ENCODE measurements at regions of chr21 and their contacts with region 1.

Region 1: GRCh38 chr21:42652527-42653230 is 742 bp upstream of the PDE9A start:
- DNase-seq: no peak
- H3K4me3 ChIP-seq: peak overlapping the region; percentile 46
- H3K27ac ChIP-seq: no peak overlapping the region
- H3K4me1 ChIP-seq: peaks cover 42% of the 10 kb centered on the region
- CTCF ChIP-seq: no peak; the same call in 1 of the 2 replicates

Region 2: DNA sequence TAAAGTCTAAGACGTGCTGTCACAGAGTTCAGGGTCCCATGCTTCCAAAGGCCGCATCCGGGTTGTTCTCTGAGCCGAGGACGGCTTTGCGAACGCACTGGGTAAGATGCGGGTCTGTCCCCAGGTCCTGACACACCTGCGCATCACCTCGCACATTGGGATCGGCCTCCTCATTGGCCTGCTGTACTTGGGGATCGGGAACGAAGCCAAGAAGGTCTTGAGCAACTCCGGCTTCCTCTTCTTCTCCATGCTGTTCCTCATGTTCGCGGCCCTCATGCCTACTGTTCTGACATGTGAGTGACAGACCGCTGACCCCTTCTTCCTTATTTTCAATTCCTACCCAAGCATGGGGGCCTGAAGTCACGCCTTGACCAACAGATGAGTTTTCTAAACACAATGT is 362.8 kb before region 1 on chr21:
- CTCF ChIA-PET with region 1: no interaction called
- POLR2A ChIA-PET with region 1: no interaction called
- intact Hi-C with region 1: no loop called
- DNase-seq: no peak
- H3K4me3 ChIP-seq: no peak overlapping the region
- H3K27ac ChIP-seq: no peak overlapping the region
- H3K4me1 ChIP-seq: peaks cover 19% of the 10 kb centered on the region
- CTCF ChIP-seq: no peak

Region 3: GRCh38 chr21:42414928-42415769 is 237.5 kb before region 1 on chr21:
- CTCF ChIA-PET with region 1: no interaction called
- POLR2A ChIA-PET with region 1: no interaction called
- intact Hi-C with region 1: no loop called
- DNase-seq: no peak
- H3K4me3 ChIP-seq: no peak overlapping the region
- H3K27ac ChIP-seq: no peak overlapping the region
- H3K4me1 ChIP-seq: no peaks in the 10 kb centered on the region
- CTCF ChIP-seq: no peak

Region 4: GRCh38 chr21:42636538-42636930 is 16.1 kb before region 1 on chr21:
- CTCF ChIA-PET with region 1: no interaction called
- POLR2A ChIA-PET with region 1: no interaction called
- intact Hi-C with region 1: no loop called
- DNase-seq: no peak
- H3K4me3 ChIP-seq: no peak overlapping the region
- H3K27ac ChIP-seq: no peak overlapping the region
- H3K4me1 ChIP-seq: no peaks in the 10 kb centered on the region
- CTCF ChIP-seq: no peak

Region 5: DNA sequence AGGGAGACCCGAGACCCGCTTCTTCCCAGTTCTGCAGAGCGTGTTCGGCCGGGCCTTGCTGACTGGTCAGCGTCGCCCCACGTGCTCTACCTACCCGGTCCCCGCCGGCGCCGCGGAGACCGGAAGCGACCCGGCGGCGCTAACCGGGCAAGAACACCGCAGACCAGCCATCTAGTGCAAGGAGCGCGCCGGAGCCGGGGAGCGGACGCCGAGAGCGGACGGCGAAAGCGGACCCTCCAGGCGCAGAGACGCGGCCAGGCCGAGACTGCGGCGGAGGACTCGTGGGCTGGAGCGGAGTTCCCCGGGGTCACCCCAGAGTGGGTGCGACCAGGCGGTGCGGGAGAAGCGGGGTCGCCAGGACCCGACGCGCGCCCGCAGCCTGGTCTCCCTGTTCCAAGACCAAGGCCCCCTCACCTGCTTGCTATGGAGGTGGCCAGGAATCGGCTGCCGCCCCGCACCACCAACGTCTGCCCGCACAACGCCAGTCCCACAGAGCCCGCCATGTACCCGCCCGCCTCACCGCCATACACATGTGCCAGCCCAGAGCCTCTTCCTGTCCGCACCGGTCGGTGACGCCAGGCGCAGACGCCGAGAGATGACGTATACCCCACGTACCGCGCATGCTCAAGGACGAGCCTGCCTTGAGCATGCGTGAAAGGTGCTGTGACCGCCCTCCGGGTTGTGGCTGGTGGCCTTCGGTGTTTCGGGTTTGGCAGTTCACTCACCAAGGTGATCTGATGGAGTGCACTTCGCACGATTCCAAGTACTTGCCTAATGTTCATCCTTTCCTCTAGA is 226.5 kb after region 1 on chr21 and contains the start of gene WDR4:
- CTCF ChIA-PET with region 1: no interaction called
- POLR2A ChIA-PET with region 1: no interaction called
- intact Hi-C with region 1: loop called (anchors 5 kb)
- DNase-seq: peak; percentile 98
- H3K4me3 ChIP-seq: peak within 1 kb of the TSS; percentile 77
- H3K27ac ChIP-seq: peak within 1 kb of the TSS; percentile 65
- H3K4me1 ChIP-seq: peaks cover 20% of the 10 kb centered on the region
- CTCF ChIP-seq: no peak
- total RNA-seq, gene WDR4: 38.1 and 45.7 TPM in 2 replicates

Region 6: GRCh38 chr21:42973991-42974831 is 321.5 kb after region 1 on chr21 and contains the start of gene PKNOX1:
- CTCF ChIA-PET with region 1: no interaction called
- POLR2A ChIA-PET with region 1: no interaction called
- intact Hi-C with region 1: loop called (anchors 10 kb)
- DNase-seq: peak; percentile 100
- H3K4me3 ChIP-seq: peak within 1 kb of the TSS; percentile 73
- H3K27ac ChIP-seq: peak within 1 kb of the TSS; percentile 51
- H3K4me1 ChIP-seq: peaks cover 28% of the 10 kb centered on the region
- CTCF ChIP-seq: no peak
- total RNA-seq, gene PKNOX1: 23.7 and 25.5 TPM in 2 replicates

Region 7: GRCh38 chr21:43659136-43660000 is 1006.7 kb after region 1 on chr21 and contains the starts of genes HSF2BP and RRP1B:
- CTCF ChIA-PET with region 1: no interaction called
- POLR2A ChIA-PET with region 1: no interaction called
- intact Hi-C with region 1: loop called (anchors 10 kb)
- DNase-seq: peak; percentile 90
- H3K4me3 ChIP-seq: peak within 1 kb of the TSS; percentile 96
- H3K27ac ChIP-seq: peak within 1 kb of the TSS; percentile 79
- H3K4me1 ChIP-seq: peaks cover 24% of the 10 kb centered on the region
- CTCF ChIP-seq: no peak
- total RNA-seq, gene HSF2BP: 3.5 and 6.8 TPM in 2 replicates
- total RNA-seq, gene RRP1B: 53.4 and 58.6 TPM in 2 replicates

Measured in OCI-LY7 (cell line).